Mammary epithelial cell (primary cell): ENCODE measurements at regions of chr4 and their contacts with region 1.

Region 1: DNA sequence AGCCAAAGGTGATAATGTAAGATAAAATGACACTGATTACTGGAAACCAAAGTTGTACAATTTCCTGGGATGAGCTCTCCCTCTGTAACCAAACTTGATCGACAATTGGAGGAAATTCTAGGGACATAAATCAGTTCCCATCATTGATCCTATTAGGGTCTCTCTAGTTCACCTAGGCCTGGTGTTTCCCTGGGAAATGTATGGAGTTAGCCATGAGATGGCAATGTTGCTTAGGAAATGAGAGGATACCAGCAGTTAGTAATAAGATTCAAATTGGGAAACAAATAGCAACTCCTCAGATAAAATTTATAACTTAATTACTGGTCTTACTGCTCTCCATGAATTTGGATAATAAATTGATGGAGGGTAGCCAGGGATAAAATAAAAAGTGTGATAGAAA is 52.2 kb downstream of the SPATA18 start:
- DNase-seq: peak; percentile 40
- H3K4me3 ChIP-seq: no peak overlapping the region
- H3K27ac ChIP-seq: no peak overlapping the region
- H3K4me1 ChIP-seq: peaks cover 25% of the 10 kb centered on the region
- H3K27me3 ChIP-seq: no peaks in the 10 kb centered on the region
- CTCF ChIP-seq: peak; percentile 25 to 54

Region 2: DNA sequence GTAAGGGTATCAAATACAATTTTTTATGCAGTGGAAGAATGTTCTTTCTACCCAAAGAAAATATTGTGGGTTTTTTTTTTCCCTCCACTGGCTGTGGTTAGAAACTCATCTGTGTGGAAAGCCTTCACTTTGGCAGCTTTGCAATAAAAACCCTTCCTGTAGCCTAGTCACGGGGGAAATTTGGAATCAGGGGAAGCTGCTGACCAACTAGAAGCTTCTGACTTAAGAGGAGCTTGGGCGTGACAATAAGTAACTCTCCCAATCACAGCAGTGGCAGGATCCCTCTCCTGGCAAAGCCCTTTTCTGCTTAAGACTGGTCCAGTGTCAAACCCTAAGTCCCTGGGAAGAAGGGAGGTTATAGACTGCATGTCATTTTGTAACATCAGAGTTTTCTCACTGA is 171.1 kb before region 1 on chr4:
- CTCF ChIA-PET with region 1: no interaction called
- dilution Hi-C with region 1: no loop called
- in situ Hi-C with region 1: no loop called
- intact Hi-C with region 1: no loop called
- DNase-seq: no peak
- H3K4me3 ChIP-seq: no peak overlapping the region
- H3K27ac ChIP-seq: no peak overlapping the region
- H3K4me1 ChIP-seq: no peaks in the 10 kb centered on the region
- H3K27me3 ChIP-seq: no peaks in the 10 kb centered on the region
- CTCF ChIP-seq: no peak

Region 3: GRCh38 chr4:51943221-51943934 is 159.9 kb before region 1 on chr4:
- CTCF ChIA-PET with region 1: no interaction called
- dilution Hi-C with region 1: no loop called
- in situ Hi-C with region 1: no loop called
- intact Hi-C with region 1: no loop called
- DNase-seq: no peak
- H3K4me3 ChIP-seq: no peak overlapping the region
- H3K27ac ChIP-seq: no peak overlapping the region
- H3K4me1 ChIP-seq: no peaks in the 10 kb centered on the region
- H3K27me3 ChIP-seq: no peaks in the 10 kb centered on the region
- CTCF ChIP-seq: no peak

Region 4: GRCh38 chr4:52038103-52038912 is 65.0 kb before region 1 on chr4 and contains the start of gene SGCB:
- CTCF ChIA-PET with region 1: no interaction called
- dilution Hi-C with region 1: no loop called
- in situ Hi-C with region 1: no loop called
- intact Hi-C with region 1: loop called (anchors 5 kb)
- DNase-seq: peak; percentile 37
- H3K4me3 ChIP-seq: peak within 1 kb of the TSS; percentile 71 to 90 (median 88)
- H3K27ac ChIP-seq: no peak within 1 kb of the TSS
- H3K4me1 ChIP-seq: peaks cover 6% of the 10 kb centered on the region
- H3K27me3 ChIP-seq: no peaks in the 10 kb centered on the region
- CTCF ChIP-seq: no peak
- total RNA-seq, gene SGCB: 23.8 to 43.8 TPM

Region 5: DNA sequence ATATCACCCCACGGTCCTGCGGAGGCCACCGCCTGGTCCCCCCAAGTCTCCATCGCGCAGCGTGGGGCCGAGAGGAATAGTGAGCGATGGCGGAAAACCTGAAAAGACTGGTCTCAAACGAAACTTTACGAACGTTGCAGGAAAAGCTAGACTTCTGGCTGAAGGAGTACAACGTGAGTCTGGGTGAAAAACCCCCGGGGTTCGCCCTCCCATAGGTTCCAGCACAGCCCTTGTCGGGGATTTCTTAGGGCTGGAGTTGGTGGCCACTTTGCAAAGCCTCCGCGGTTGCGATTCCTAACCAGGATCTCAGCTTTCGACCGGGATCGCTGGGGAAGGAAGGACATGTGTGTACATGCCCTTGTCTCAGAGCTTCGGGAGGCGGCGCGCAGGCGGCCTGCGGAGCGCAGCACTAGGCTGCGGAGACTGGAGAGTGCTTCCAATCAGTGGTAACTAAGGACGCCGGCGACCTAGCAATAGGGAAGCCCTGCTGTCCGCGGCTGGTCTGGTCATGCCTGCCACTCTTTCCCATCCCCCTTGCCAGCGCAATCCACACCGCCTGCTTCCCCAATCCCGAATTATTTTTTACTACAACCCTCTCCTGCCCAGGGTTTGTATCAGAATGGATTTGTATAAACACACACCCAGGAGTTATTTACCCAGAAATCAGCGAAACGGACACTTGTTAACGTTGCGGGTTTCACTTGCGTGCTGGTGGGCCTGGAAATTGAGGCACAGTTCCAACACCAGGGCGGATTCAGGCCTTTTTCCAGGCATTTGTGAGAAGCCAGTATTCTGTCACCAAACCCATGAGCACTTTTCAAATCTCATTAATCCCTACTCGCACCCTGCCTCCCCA is 51.5 kb before region 1 on chr4:
- CTCF ChIA-PET with region 1: no interaction called
- dilution Hi-C with region 1: no loop called
- in situ Hi-C with region 1: no loop called
- intact Hi-C with region 1: loop called (anchors 5 kb)
- DNase-seq: peak; percentile 97
- H3K4me3 ChIP-seq: peak overlapping the region; percentile 47 to 68 (median 60)
- H3K27ac ChIP-seq: peak overlapping the region; percentile 79
- H3K4me1 ChIP-seq: peaks cover 16% of the 10 kb centered on the region
- H3K27me3 ChIP-seq: no peaks in the 10 kb centered on the region
- CTCF ChIP-seq: no peak

Region 6: GRCh38 chr4:52172166-52172565 is 68.8 kb after region 1 on chr4:
- CTCF ChIA-PET with region 1: no interaction called
- dilution Hi-C with region 1: no loop called
- in situ Hi-C with region 1: no loop called
- intact Hi-C with region 1: loop called (anchors 1 kb)
- DNase-seq: peak; percentile 9
- H3K4me3 ChIP-seq: no peak overlapping the region
- H3K27ac ChIP-seq: no peak overlapping the region
- H3K4me1 ChIP-seq: no peaks in the 10 kb centered on the region
- H3K27me3 ChIP-seq: no peaks in the 10 kb centered on the region
- CTCF ChIP-seq: peak; percentile 46 to 52

Region 7: GRCh38 chr4:52234561-52235440 is 131.5 kb after region 1 on chr4:
- CTCF ChIA-PET with region 1: no interaction called
- dilution Hi-C with region 1: no loop called
- in situ Hi-C with region 1: no loop called
- intact Hi-C with region 1: loop called (anchors 1 kb)
- DNase-seq: peak; percentile 41
- H3K4me3 ChIP-seq: no peak overlapping the region
- H3K27ac ChIP-seq: no peak overlapping the region
- H3K4me1 ChIP-seq: no peaks in the 10 kb centered on the region
- H3K27me3 ChIP-seq: peaks cover 5% of the 10 kb centered on the region
- CTCF ChIP-seq: peak; percentile 58 to 68

Region 8: DNA sequence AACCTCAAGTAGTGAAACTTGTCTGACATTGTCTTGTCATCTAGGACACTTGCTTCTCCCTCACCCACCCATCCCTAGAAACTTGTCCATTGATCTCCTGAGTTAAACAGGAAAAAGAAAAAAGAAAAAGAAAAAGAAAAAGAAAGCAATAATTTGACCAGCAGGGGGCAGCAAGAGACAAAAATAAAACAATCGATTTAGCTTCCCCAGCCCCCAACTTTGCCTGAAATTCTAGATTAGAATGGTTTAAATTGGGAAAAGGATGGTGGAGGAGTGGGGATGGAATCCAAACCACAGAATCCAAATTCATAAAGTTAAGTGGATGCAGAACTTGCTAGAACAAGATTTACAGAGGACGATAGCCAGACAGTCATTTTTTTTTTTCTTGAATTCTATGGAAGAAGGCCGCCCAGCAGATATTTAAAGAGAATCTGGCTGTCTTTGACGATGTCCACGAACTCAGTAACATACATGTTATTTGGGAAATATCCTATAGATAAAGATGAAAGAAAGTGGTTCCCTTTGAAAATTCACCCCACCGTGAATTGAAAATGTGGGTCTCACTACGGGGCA is 272.9 kb after region 1 on chr4:
- CTCF ChIA-PET with region 1: interaction called, 5 read pairs
- dilution Hi-C with region 1: no loop called
- in situ Hi-C with region 1: no loop called
- intact Hi-C with region 1: loop called (anchors 5 kb)
- DNase-seq: peak; percentile 29
- H3K4me3 ChIP-seq: no peak overlapping the region
- H3K27ac ChIP-seq: no peak overlapping the region
- H3K4me1 ChIP-seq: no peaks in the 10 kb centered on the region
- H3K27me3 ChIP-seq: no peaks in the 10 kb centered on the region
- CTCF ChIP-seq: peak; percentile 37 to 55

Region 9: DNA sequence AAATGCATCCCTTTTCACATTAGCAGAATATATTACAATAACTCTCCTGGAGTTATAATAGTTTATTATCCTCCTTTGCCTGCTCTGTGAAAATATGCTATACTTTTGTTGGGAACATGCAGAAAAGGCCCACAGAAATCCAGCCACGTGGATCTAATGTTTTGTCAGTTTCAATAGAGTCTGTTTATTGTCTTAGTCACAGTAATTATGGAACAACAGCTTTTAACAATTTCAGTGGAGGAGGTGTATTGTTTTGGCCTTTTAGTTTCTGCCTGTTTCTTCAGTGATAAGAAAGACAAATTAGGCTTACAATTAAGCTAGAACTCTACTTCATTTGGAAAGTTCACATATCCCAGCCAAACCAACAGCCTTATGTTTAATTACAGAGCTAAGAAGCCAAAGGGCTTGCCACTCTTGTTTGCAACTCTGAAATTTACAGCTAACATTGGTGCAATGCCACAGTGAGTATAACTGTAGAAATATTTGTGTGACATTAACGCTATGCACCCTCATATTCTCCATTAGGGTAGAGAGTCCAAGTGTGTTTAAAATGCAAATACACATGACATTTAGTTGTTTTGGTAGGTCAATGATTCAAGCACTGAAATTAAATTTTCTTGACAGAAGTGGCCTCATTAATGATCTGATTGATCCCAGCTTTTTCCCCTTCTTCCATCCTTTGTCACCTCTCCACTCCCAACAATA is 380.0 kb after region 1 on chr4:
- CTCF ChIA-PET with region 1: no interaction called
- dilution Hi-C with region 1: no loop called
- in situ Hi-C with region 1: no loop called
- intact Hi-C with region 1: no loop called
- DNase-seq: no peak
- H3K4me3 ChIP-seq: no peak overlapping the region
- H3K27ac ChIP-seq: no peak overlapping the region
- H3K4me1 ChIP-seq: no peaks in the 10 kb centered on the region
- H3K27me3 ChIP-seq: peaks cover 3% of the 10 kb centered on the region
- CTCF ChIP-seq: no peak

Region 10: GRCh38 chr4:52665592-52665991 is 562.3 kb after region 1 on chr4:
- CTCF ChIA-PET with region 1: no interaction called
- dilution Hi-C with region 1: no loop called
- in situ Hi-C with region 1: no loop called
- intact Hi-C with region 1: loop called (anchors 2 kb)
- DNase-seq: no peak
- H3K4me3 ChIP-seq: no peak overlapping the region
- H3K27ac ChIP-seq: no peak overlapping the region
- H3K4me1 ChIP-seq: peaks cover 8% of the 10 kb centered on the region
- H3K27me3 ChIP-seq: no peaks in the 10 kb centered on the region
- CTCF ChIP-seq: peak; percentile 8 to 51